HEK293T (cell line): ENCODE measurements at regions of chr11 and their contacts with region 1.

Region 1: DNA sequence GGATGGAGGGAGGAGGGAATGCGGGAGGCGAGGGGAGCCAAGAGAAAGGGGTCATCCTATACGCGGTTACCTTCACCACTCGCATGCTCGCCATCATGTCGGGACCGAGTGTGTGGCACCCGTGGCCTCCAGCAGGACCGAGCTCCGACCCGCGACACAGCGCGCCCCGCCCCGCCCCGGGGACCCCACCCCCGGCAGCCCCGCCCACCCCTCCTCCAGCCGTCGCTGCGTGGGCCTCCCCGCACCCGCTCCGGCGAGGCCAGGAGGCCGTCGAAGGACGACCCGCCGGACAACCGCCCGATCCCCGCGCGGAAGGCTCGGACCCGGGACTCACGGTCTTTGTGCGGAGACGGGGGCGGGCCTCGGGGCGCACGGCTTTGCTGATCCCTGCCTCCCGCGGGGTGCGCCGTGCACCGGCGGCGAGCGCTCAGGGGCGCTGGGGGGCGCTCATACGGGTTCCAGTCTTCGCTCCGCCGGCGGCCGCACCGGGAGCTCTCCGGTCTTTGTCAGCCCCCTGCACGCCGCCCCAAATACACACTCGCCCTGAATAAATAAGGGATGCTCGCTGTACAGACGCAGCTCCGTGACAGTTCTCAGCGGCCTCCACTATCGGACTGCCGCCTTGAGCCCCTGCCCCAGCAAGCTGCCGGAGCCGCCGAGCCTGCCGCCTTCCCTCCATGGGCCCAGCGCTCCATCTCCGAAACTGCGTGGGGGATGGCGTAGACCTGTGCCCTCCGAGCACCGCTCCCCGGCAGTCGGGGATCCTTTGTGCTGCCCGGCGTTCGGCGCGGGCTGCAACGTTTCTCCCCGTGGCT is at the start of gene UBE2L6:
- DNase-seq: peak; percentile 87

Region 2: GRCh38 chr11:57637626-57638004 is 69.9 kb after region 1 on chr11:
- CTCF ChIA-PET with region 1: interaction called, 59 read pairs
- POLR2A ChIA-PET with region 1: interaction called, 22 read pairs
- DNase-seq: no peak

Region 3: DNA sequence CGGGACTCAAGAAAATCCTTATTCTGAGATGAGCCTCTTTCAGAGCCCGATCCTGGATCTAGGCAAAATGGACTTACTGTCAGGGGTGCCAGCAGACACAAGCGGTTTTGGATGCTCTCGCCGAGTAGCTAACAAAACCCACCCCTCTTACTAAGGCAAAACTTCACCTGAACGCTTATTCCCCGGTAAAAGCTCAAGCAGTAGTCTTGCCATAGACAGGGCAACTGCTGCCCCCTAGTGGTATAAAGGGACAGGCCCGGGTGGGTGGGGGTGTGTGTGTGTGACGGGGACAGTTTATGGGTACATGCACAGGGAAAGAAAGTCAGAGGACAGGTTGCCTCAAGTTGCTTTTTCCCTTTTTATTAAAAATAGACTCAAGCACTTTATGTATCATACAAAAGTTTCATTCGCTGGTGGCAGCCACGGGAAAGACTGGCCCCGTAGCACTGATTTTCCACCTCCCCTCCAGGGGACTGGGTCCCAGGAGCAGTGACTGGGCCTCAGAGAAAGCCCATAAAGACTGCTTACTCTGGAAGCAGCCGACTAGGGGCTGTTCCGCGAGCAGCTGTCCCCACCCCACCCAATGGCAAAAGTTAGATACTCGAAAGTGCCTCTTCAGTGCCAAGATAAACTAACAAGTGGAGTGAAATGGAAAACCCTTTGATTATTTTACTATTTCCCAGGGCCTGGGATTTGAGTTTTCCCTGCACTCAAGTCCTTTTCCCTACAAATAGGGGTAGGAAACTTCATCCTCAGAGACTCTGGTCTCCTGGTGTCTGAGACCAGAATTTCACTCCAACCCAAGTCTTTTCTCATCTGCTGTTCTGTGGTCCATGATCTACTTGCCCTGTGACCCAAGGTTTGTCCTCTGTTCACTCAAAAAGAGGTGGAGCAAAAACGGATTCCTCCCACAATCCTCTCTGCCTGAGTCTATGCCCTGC is 77.3 kb after region 1 on chr11:
- CTCF ChIA-PET with region 1: interaction called, 59 read pairs
- POLR2A ChIA-PET with region 1: interaction called, 22 read pairs
- DNase-seq: peak; percentile 78